Right lobe of liver (tissue), 6 donors: ENCODE measurements at regions of chr6 and their contacts with region 1.

Region 1: GRCh38 chr6:18327626-18328025 is 59.5 kb upstream of the RNF144B start:
- DNase-seq: peak in 1 of 3 donors; percentile 54
- ATAC-seq: peak in 3 of 4 donors; percentile 13 to 27 (median 25)
- H3K4me3 ChIP-seq: no peak overlapping the region
- H3K27ac ChIP-seq: peak overlapping the region in 1 of 3 donors; percentile 43
- H3K4me1 ChIP-seq: peaks cover 0 to 8% (median 0%) of the 10 kb centered on the region in 4 donors
- H3K27me3 ChIP-seq: no peaks in the 10 kb centered on the region
- CTCF ChIP-seq: no peak
- POLR2A ChIP-seq: peak; percentile 22

Region 2: GRCh38 chr6:18253635-18254034 is 74.0 kb before region 1 on chr6:
- intact Hi-C with region 1: no loop called
- DNase-seq: no peak
- ATAC-seq: no peak
- H3K4me3 ChIP-seq: no peak overlapping the region
- H3K27ac ChIP-seq: no peak overlapping the region
- H3K4me1 ChIP-seq: no peaks in the 10 kb centered on the region
- H3K27me3 ChIP-seq: no peaks in the 10 kb centered on the region
- CTCF ChIP-seq: no peak
- POLR2A ChIP-seq: no peak

Region 3: GRCh38 chr6:18503593-18504231 is 176.1 kb after region 1 on chr6:
- intact Hi-C with region 1: loop called (anchors 5 kb)
- DNase-seq: peak in 2 of 3 donors; percentile 36 to 71
- ATAC-seq: peak; percentile 92 to 94 (median 94)
- H3K4me3 ChIP-seq: peak overlapping the region; percentile 25 to 51 (median 48)
- H3K27ac ChIP-seq: peak overlapping the region; percentile 61 to 78 (median 64)
- H3K4me1 ChIP-seq: peaks cover 0 to 7% (median 3%) of the 10 kb centered on the region in 4 donors
- H3K27me3 ChIP-seq: no peaks in the 10 kb centered on the region
- CTCF ChIP-seq: peak; percentile 85 to 94 (median 92)
- POLR2A ChIP-seq: peak; percentile 51